Endothelial cell of umbilical vein (primary cell): ENCODE measurements at regions of chr2 and their contacts with region 1.

Region 1: DNA sequence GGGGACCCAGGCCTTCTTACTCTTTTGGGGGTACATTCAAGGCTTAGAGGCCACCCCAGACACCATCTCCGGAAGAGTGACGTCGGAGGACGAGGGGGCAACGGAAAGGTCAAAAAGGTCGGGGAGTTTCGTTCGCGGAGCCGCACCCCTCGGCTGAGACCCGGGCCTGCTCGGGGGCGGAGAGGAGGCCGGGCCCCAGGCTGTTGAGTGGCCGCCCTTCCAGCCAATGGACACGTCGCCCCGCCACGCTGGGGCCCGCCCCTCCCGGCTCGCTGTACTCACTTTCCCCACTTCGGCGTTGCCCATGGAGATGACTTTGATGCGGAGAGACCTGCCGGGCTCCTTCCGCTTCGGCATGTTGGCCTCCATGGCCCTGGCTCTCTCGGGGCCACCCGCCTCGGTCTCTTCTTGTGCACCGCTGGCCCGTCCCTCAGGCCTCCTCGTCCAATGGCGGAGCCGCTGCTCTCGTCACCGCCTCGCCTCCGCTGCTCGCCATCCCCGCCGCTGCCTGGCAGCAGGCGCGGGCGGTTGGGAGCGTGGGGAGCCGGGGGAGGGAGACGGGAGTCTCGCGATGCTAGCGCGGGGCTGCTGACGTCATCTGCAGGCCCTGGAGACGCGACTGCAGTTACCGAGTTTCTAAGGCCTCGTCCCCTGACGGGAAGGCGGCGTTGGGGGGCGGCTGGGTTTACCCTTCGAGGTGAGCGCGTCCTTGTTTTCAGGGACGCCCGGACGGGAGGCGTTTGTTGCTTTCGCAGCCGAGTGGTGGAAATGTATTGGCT is at the start of gene DNAJC27:
- DNase-seq: peak; percentile 99
- H3K4me3 ChIP-seq: peak within 1 kb of the TSS; percentile 57 to 79 (median 72)
- H3K27ac ChIP-seq: peak within 1 kb of the TSS; percentile 90
- H3K4me1 ChIP-seq: peaks cover 10% of the 10 kb centered on the region
- H3K27me3 ChIP-seq: no peaks in the 10 kb centered on the region
- CTCF ChIP-seq: peak in 1 of 2 donors; percentile 2
- POLR2A ChIP-seq: peak; percentile 93
- total RNA-seq, gene DNAJC27: 3.2 and 3.9 TPM in 2 replicates

Region 2: GRCh38 chr2:24792874-24793760 is 178.6 kb before region 1 on chr2 and contains the starts of genes CENPO and PTRHD1:
- CTCF ChIA-PET with region 1: interaction called, 4 read pairs
- POLR2A ChIA-PET with region 1: no interaction called
- dilution Hi-C with region 1: no loop called
- intact Hi-C with region 1: loop called (anchors 2 kb)
- DNase-seq: peak; percentile 98
- H3K4me3 ChIP-seq: peak within 1 kb of the TSS; percentile 57 to 82 (median 61)
- H3K27ac ChIP-seq: peak within 1 kb of the TSS; percentile 81
- H3K4me1 ChIP-seq: peaks cover 20% of the 10 kb centered on the region
- H3K27me3 ChIP-seq: no peaks in the 10 kb centered on the region
- CTCF ChIP-seq: peak; percentile 67 to 82
- POLR2A ChIP-seq: no peak
- total RNA-seq, gene CENPO: 42.2 and 45.3 TPM in 2 replicates
- total RNA-seq, gene PTRHD1: 35.6 and 41.1 TPM in 2 replicates

Region 3: DNA sequence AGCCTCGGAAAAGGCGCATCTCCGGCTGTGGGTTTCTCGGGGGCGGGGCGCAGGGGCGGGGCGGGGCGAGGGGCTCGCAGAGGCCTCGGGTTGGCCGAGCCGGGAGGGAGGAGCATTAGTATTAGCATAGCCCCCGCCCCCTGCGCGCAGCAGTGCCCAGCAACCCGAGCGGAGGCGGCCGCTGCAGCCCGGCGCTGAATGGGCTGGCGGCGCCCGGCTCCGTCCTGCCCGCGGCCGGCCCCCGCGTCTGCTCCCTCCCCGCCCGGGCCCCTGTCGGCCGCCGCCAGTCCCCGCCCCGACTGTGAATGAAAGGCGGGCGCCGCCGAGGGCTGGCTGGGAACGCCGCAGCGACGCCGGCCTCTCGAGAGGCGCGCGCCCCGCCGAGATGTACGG is 70.2 kb after region 1 on chr2 and contains the start of gene EFR3B:
- CTCF ChIA-PET with region 1: interaction called, 14 read pairs
- POLR2A ChIA-PET with region 1: no interaction called
- dilution Hi-C with region 1: no loop called
- intact Hi-C with region 1: loop called (anchors 1 kb)
- DNase-seq: peak; percentile 94
- H3K4me3 ChIP-seq: peak within 1 kb of the TSS; percentile 44 to 75 (median 67)
- H3K27ac ChIP-seq: no peak within 1 kb of the TSS
- H3K4me1 ChIP-seq: peaks cover 21% of the 10 kb centered on the region
- H3K27me3 ChIP-seq: peaks cover 2 to 11% of the 10 kb centered on the region in 2 experiments
- CTCF ChIP-seq: no peak
- POLR2A ChIP-seq: no peak
- total RNA-seq, gene EFR3B: 0.58 and 0.77 TPM in 2 replicates

Region 4: GRCh38 chr2:25131567-25132298 is 160.0 kb after region 1 on chr2:
- CTCF ChIA-PET with region 1: interaction called, 679 read pairs
- POLR2A ChIA-PET with region 1: interaction called, 5 read pairs
- dilution Hi-C with region 1: no loop called
- intact Hi-C with region 1: loop called (anchors 1 kb)
- DNase-seq: no peak
- H3K4me3 ChIP-seq: no peak overlapping the region
- H3K27ac ChIP-seq: no peak overlapping the region
- H3K4me1 ChIP-seq: peaks cover 4% of the 10 kb centered on the region
- H3K27me3 ChIP-seq: peaks cover 7 to 24% of the 10 kb centered on the region in 2 experiments
- CTCF ChIP-seq: no peak
- POLR2A ChIP-seq: no peak

Region 5: GRCh38 chr2:25165992-25166875 is 194.5 kb after region 1 on chr2:
- CTCF ChIA-PET with region 1: interaction called, 12 read pairs
- POLR2A ChIA-PET with region 1: no interaction called
- dilution Hi-C with region 1: no loop called
- intact Hi-C with region 1: no loop called
- DNase-seq: no peak
- H3K4me3 ChIP-seq: no peak overlapping the region
- H3K27ac ChIP-seq: no peak overlapping the region
- H3K4me1 ChIP-seq: peaks cover 2% of the 10 kb centered on the region
- H3K27me3 ChIP-seq: peaks cover 67 to 71% of the 10 kb centered on the region in 2 experiments
- CTCF ChIP-seq: peak in 1 of 2 donors; percentile 4
- POLR2A ChIP-seq: no peak

Region 6: DNA sequence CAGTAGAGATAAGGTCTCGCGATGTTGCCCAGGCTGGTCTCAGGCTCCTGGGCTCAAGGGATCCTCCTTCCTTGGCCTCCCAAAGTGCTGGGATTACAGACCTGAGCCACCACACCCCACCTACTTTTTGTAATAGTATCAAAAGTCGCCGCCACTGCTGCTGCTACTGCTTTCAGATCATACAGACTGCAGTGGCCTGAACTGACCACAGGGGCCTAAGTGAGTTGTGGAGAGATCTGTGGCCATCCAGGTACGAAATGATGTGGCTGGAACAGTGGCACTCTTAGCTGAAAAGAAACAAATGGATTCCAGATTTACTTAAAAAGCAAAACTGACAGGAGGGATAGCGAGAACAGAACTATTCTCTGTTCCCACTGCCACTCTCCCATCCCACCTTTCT is 229.5 kb after region 1 on chr2:
- CTCF ChIA-PET with region 1: interaction called, 119 read pairs
- POLR2A ChIA-PET with region 1: no interaction called
- dilution Hi-C with region 1: no loop called
- intact Hi-C with region 1: loop called (anchors 1 kb)
- DNase-seq: no peak
- H3K4me3 ChIP-seq: no peak overlapping the region
- H3K27ac ChIP-seq: no peak overlapping the region
- H3K4me1 ChIP-seq: no peaks in the 10 kb centered on the region
- H3K27me3 ChIP-seq: no peaks in the 10 kb centered on the region
- CTCF ChIP-seq: peak in 1 of 2 donors; percentile 21
- POLR2A ChIP-seq: no peak